ENCODE measurements at regions of chr14 and their contacts with region 1.

Region 1: GRCh38 chr14:55107766-55108554 is 21.1 kb upstream of the LGALS3 start:
- DNase-seq: peak; percentile 83
- ATAC-seq: peak; percentile 87
- H3K4me3 ChIP-seq: peak overlapping the region in 1 of 3 experiments; percentile 37; a peak in 2 of 6 replicates
- H3K27ac ChIP-seq: peak overlapping the region; percentile 85
- H3K4me1 ChIP-seq: peaks cover 58% of the 10 kb centered on the region
- H3K27me3 ChIP-seq: no peaks in the 10 kb centered on the region
- CTCF ChIP-seq: no peak
- EP300 ChIP-seq: peak in 1 of 2 experiments; percentile 38; a peak in 1 of 4 replicates
- POLR2A ChIP-seq: peak; percentile 64 to 79
- RAD21 ChIP-seq: peak; percentile 31; the same call in 1 of the 2 replicates

Region 2: DNA sequence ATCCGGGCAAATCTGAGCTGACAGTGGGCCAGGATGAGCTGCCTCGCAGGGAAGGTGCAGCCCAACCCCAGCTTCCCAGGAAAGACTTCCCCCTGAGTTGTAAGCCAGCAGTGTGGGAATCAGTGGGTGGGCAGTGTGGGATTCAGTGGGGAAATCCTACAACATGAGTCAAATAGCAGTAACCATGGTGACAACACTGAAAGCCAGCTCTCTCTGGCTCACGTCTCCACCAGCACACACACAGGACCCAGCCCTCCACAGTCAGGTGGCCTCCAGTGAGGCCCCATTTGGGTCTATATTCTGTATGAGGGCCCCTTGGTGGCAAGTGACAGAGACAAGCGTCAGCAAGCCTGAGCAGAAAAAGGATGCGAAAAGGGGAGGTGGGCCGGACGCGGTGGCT is 15.1 kb after region 1 on chr14:
- CTCF ChIA-PET with region 1: no interaction called
- POLR2A ChIA-PET with region 1: interaction called, 22 read pairs
- in situ Hi-C with region 1: no loop called
- intact Hi-C with region 1: loop called (anchors 2 kb)
- DNase-seq: no peak
- ATAC-seq: peak; percentile 22
- H3K4me3 ChIP-seq: peak overlapping the region in 1 of 3 experiments; percentile 34; a peak in 1 of 6 replicates
- H3K27ac ChIP-seq: peak overlapping the region; percentile 61
- H3K4me1 ChIP-seq: peaks cover 48% of the 10 kb centered on the region
- H3K27me3 ChIP-seq: peaks cover 2 to 10% of the 10 kb centered on the region in 2 experiments; a peak in 3 of 5 replicates
- CTCF ChIP-seq: no peak
- EP300 ChIP-seq: no peak
- POLR2A ChIP-seq: no peak
- RAD21 ChIP-seq: no peak

Measured in HepG2 (cell line).